T-cell (primary cell): ENCODE measurements at regions of chrX and their contacts with region 1.

Region 1: DNA sequence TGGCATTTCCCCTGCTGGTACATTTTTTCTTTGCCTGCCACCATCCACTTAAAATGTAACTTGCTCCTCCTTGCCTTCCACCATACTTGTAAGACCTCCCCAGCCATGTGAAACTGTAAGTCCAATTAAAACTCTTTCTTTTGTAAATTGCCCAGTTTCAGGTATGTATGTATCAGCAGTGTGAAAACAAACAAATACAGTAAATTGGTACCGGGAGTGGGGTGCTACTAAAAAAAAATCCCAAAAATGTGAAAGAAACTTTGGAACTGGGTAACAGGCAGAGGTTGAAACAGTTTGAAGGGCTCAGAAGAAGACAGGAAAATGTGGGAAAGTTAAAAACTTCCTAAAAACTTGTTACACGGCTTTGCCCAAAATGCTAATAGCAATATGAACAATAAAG is 16.3 kb downstream of the ARHGEF9 start:
- DNase-seq: no peak
- ATAC-seq: no peak
- H3K4me3 ChIP-seq: no peak overlapping the region
- H3K4me3 Mint-ChIP-seq: no peak overlapping the region
- H3K27ac ChIP-seq: no peak overlapping the region
- H3K27ac Mint-ChIP-seq: no peak overlapping the region
- H3K4me1 ChIP-seq: no peaks in the 10 kb centered on the region
- H3K4me1 Mint-ChIP-seq: no peaks in the 10 kb centered on the region
- H3K27me3 ChIP-seq: peaks cover 0 to 6% of the 10 kb centered on the region in 2 experiments
- H3K27me3 Mint-ChIP-seq: peaks cover 1 to 37% of the 10 kb centered on the region in 2 donors

Region 2: DNA sequence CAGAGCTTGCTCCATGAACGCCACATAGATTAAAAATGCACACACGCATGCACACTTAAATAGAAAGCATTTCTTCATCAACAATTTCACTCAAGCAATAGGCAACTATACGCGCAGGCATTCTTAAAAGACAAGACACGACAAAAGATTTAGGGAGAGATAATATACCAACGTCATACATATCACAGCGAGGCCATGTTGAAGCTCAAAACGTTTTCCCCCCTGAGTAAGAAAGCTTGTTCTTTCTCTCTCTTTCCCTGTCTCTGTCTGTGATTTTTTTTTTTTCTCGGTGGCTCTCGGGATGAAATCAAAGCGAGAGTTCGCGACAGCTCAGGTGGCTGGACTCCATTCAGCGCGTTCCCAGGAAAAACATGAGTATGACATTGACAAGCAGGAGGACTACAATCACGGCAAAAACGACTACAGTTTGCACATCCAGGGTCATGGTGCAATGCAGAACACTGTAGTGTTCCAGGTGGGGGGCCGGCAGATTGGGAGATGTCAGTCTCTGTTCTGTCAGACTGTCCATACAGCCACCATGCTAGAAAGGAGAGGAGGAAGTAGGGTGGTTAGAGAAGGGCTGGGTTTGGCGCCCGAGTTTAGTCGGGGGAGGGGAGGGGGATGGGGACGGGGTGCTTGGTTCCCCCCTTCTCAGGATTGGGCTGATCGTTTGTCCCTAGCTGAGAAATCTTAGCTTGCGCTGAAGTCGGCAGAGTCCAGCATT is 14.5 kb before region 1 on chrX:
- CTCF ChIA-PET with region 1: interaction called, 3 read pairs
- POLR2A ChIA-PET with region 1: interaction called in 1 of 2 experiments, 12 read pairs
- DNase-seq: peak in 30 of 35 experiments; percentile 0 to 52 (median 18)
- ATAC-seq: peak; percentile 35 to 62 (median 52)
- H3K4me3 ChIP-seq: peak overlapping the region; percentile 86 to 92
- H3K4me3 Mint-ChIP-seq: peak overlapping the region; percentile 97 to 100 (median 98)
- H3K27ac ChIP-seq: peak overlapping the region; percentile 89
- H3K27ac Mint-ChIP-seq: peak overlapping the region; percentile 96 to 99
- H3K4me1 ChIP-seq: peaks cover 2 to 12% of the 10 kb centered on the region in 2 experiments
- H3K4me1 Mint-ChIP-seq: peaks cover 25 to 44% (median 35%) of the 10 kb centered on the region in 3 donors
- H3K27me3 ChIP-seq: no peaks in the 10 kb centered on the region
- H3K27me3 Mint-ChIP-seq: peaks cover 0 to 10% of the 10 kb centered on the region in 2 donors